GM12878 (cell line): ENCODE measurements at regions of chr1 and their contacts with region 1.

Region 1: GRCh38 chr1:160748181-160748877 is 9.3 kb downstream of the SLAMF7 start:
- DNase-seq: no peak
- ATAC-seq: no peak
- H3K4me3 ChIP-seq: no peak overlapping the region
- H3K27ac ChIP-seq: no peak overlapping the region
- H3K4me1 ChIP-seq: peaks cover 51% of the 10 kb centered on the region
- H3K27me3 ChIP-seq: no peaks in the 10 kb centered on the region
- CTCF ChIP-seq: peak; percentile 18 to 47 (median 38); a peak in 4 of 6 replicates
- EP300 ChIP-seq: no peak
- POLR2A ChIP-seq: no peak; the same call in 1 of the 2 replicates
- RAD21 ChIP-seq: no peak

Region 2: DNA sequence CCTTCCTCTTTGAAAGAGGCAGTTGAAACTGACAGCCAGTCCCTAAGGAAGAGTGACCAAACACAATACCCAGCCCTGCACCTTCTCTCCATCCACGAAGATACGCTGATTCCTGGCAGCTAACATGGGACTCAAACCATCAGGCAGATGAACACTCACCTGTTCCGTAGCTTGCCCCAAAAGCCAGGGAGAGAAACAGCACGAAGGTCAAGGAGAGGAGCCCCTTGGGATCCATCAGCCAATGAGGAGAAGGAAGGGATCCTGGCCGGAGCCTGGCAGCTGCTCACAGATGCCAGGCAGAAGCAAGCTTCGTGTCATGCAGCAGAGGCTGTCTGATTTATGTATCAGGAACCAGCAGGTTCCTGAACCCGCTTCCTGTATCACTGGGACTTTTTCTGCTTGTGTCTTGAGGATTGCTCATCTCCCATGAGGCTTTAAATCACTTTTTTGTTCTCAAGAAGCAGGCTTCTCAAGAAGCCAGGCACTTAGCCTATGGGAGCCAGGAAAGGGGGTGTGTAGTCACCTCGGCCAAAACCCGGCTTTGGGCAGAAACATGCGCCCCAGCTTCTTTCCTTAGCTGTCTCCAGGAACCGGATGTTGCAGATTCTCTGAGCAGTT is 101.5 kb before region 1 on chr1 and contains the start of gene SLAMF1:
- CTCF ChIA-PET with region 1: no interaction called
- POLR2A ChIA-PET with region 1: interaction called, 25 read pairs
- RAD21 ChIA-PET with region 1: interaction called, 6 read pairs
- SMC1A ChIA-PET with region 1: interaction called, 3 read pairs
- in situ Hi-C with region 1: no loop called
- intact Hi-C with region 1: no loop called
- DNase-seq: peak; percentile 95
- ATAC-seq: peak; percentile 63
- H3K4me3 ChIP-seq: peak within 1 kb of the TSS; percentile 95
- H3K27ac ChIP-seq: peak within 1 kb of the TSS; percentile 95
- H3K4me1 ChIP-seq: peaks cover 19% of the 10 kb centered on the region
- H3K27me3 ChIP-seq: no peaks in the 10 kb centered on the region
- CTCF ChIP-seq: no peak
- EP300 ChIP-seq: peak; percentile 5 to 19; a peak in 1 of 4 replicates
- POLR2A ChIP-seq: peak; percentile 82
- RAD21 ChIP-seq: no peak
- polyA plus RNA-seq, gene SLAMF1: 128 to 145 TPM

Region 3: GRCh38 chr1:160726498-160727315 is 21.6 kb before region 1 on chr1:
- CTCF ChIA-PET with region 1: interaction called, 136 read pairs
- POLR2A ChIA-PET with region 1: interaction called, 65 read pairs
- RAD21 ChIA-PET with region 1: interaction called, 65 read pairs
- SMC1A ChIA-PET with region 1: interaction called, 189 read pairs
- in situ Hi-C with region 1: no loop called
- intact Hi-C with region 1: loop called (anchors 1 kb)
- DNase-seq: no peak
- ATAC-seq: peak; percentile 80
- H3K4me3 ChIP-seq: no peak overlapping the region
- H3K27ac ChIP-seq: peak overlapping the region; percentile 85
- H3K4me1 ChIP-seq: peaks cover 40% of the 10 kb centered on the region
- H3K27me3 ChIP-seq: no peaks in the 10 kb centered on the region
- CTCF ChIP-seq: peak; percentile 81 to 92 (median 91); a peak in 5 of 6 replicates
- EP300 ChIP-seq: no peak
- POLR2A ChIP-seq: no peak
- RAD21 ChIP-seq: peak; percentile 99

Region 4: DNA sequence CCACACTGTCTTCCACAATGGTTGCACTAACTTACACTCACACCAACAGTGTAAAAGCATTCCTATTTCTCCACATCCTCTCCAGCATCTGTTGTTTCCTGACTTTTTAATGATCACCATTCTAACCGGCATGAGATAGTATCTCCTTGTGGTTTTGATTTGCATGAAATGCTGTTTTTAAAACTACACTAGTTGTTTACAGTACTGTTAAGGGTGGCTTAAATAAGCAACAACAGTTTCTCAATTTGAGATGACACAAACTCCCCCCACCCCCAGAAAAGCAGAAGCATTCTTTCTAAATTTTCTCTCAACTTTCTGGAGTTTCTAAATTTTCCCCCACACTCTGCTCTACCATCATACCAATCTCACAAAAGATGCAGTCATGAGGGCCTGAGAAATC is 16.3 kb before region 1 on chr1:
- CTCF ChIA-PET with region 1: interaction called, 136 read pairs
- POLR2A ChIA-PET with region 1: interaction called, 65 read pairs
- RAD21 ChIA-PET with region 1: interaction called, 65 read pairs
- SMC1A ChIA-PET with region 1: interaction called, 189 read pairs
- in situ Hi-C with region 1: no loop called
- intact Hi-C with region 1: no loop called
- DNase-seq: no peak
- ATAC-seq: peak; percentile 63
- H3K4me3 ChIP-seq: peak overlapping the region; percentile 4; the same call in 1 of the 2 replicates
- H3K27ac ChIP-seq: peak overlapping the region; percentile 74
- H3K4me1 ChIP-seq: peaks cover 40% of the 10 kb centered on the region
- H3K27me3 ChIP-seq: no peaks in the 10 kb centered on the region
- CTCF ChIP-seq: no peak
- EP300 ChIP-seq: no peak
- POLR2A ChIP-seq: no peak
- RAD21 ChIP-seq: no peak

Region 5: DNA sequence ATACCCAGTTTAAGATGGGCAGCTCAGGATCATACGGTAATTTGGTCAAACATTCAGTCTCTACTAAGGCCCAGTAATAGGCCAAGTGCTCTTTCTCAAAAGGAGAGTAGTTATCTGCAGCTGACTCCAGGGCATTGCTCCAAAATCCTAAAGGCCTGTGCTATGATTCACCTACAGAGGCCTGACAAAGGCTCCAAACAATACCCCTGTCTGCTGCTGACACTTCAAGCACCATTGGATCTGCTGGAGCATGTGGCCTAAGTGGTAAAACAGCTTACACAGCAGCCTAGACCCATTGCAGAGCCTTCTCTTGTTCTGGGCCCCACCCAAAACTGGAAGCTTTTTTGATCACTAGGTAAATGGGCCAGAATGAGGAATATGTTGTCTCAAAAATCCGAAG is 13.6 kb after region 1 on chr1:
- CTCF ChIA-PET with region 1: interaction called, 234 read pairs
- POLR2A ChIA-PET with region 1: interaction called, 31 read pairs
- RAD21 ChIA-PET with region 1: interaction called, 151 read pairs
- SMC1A ChIA-PET with region 1: interaction called, 447 read pairs
- in situ Hi-C with region 1: no loop called
- intact Hi-C with region 1: no loop called
- DNase-seq: no peak
- ATAC-seq: no peak
- H3K4me3 ChIP-seq: no peak overlapping the region
- H3K27ac ChIP-seq: no peak overlapping the region
- H3K4me1 ChIP-seq: peaks cover 3% of the 10 kb centered on the region
- H3K27me3 ChIP-seq: no peaks in the 10 kb centered on the region
- CTCF ChIP-seq: no peak
- EP300 ChIP-seq: no peak
- POLR2A ChIP-seq: no peak
- RAD21 ChIP-seq: no peak

Region 6: GRCh38 chr1:160789702-160790611 is 41.6 kb after region 1 on chr1:
- CTCF ChIA-PET with region 1: interaction called, 9 read pairs
- POLR2A ChIA-PET with region 1: interaction called, 6 read pairs
- RAD21 ChIA-PET with region 1: interaction called, 15 read pairs
- SMC1A ChIA-PET with region 1: interaction called, 6 read pairs
- in situ Hi-C with region 1: no loop called
- intact Hi-C with region 1: no loop called
- DNase-seq: peak; percentile 89
- ATAC-seq: peak; percentile 91
- H3K4me3 ChIP-seq: no peak overlapping the region; the same call in 1 of the 2 replicates
- H3K27ac ChIP-seq: peak overlapping the region; percentile 86
- H3K4me1 ChIP-seq: peaks cover 19% of the 10 kb centered on the region
- H3K27me3 ChIP-seq: no peaks in the 10 kb centered on the region
- CTCF ChIP-seq: no peak
- EP300 ChIP-seq: peak; percentile 96 to 99
- POLR2A ChIP-seq: no peak
- RAD21 ChIP-seq: no peak

Region 7: GRCh38 chr1:160795951-160796383 is 47.6 kb after region 1 on chr1 and contains the start of gene LY9:
- CTCF ChIA-PET with region 1: interaction called, 9 read pairs
- POLR2A ChIA-PET with region 1: no interaction called
- RAD21 ChIA-PET with region 1: interaction called, 15 read pairs
- SMC1A ChIA-PET with region 1: interaction called, 17 read pairs
- in situ Hi-C with region 1: no loop called
- intact Hi-C with region 1: no loop called
- DNase-seq: peak; percentile 97
- ATAC-seq: peak; percentile 79
- H3K4me3 ChIP-seq: peak within 1 kb of the TSS; percentile 63
- H3K27ac ChIP-seq: peak within 1 kb of the TSS; percentile 78
- H3K4me1 ChIP-seq: peaks cover 42% of the 10 kb centered on the region
- H3K27me3 ChIP-seq: no peaks in the 10 kb centered on the region
- CTCF ChIP-seq: no peak
- EP300 ChIP-seq: peak; percentile 96 to 98
- POLR2A ChIP-seq: peak; percentile 66
- RAD21 ChIP-seq: no peak
- polyA plus RNA-seq, gene LY9: 2.7 to 2.8 TPM

Region 8: GRCh38 chr1:160971618-160972056 is 223.3 kb after region 1 on chr1:
- CTCF ChIA-PET with region 1: no interaction called
- POLR2A ChIA-PET with region 1: no interaction called
- RAD21 ChIA-PET with region 1: no interaction called
- SMC1A ChIA-PET with region 1: no interaction called
- in situ Hi-C with region 1: no loop called
- intact Hi-C with region 1: no loop called
- DNase-seq: peak; percentile 70
- ATAC-seq: peak; percentile 93
- H3K4me3 ChIP-seq: no peak overlapping the region
- H3K27ac ChIP-seq: no peak overlapping the region
- H3K4me1 ChIP-seq: peaks cover 14% of the 10 kb centered on the region
- H3K27me3 ChIP-seq: no peaks in the 10 kb centered on the region
- CTCF ChIP-seq: no peak
- EP300 ChIP-seq: peak; percentile 11 to 56; a peak in 1 of 4 replicates
- POLR2A ChIP-seq: no peak
- RAD21 ChIP-seq: no peak